Dendritic cell treated with granulocyte-macrophage colony-stimulating factor and Interleukin-4, amounts not matched to agents 40 ng/mL and 50 ng/mL, for 4 days (primary cell): ENCODE measurements at regions of chr9 and their contacts with region 1.

Region 1: DNA sequence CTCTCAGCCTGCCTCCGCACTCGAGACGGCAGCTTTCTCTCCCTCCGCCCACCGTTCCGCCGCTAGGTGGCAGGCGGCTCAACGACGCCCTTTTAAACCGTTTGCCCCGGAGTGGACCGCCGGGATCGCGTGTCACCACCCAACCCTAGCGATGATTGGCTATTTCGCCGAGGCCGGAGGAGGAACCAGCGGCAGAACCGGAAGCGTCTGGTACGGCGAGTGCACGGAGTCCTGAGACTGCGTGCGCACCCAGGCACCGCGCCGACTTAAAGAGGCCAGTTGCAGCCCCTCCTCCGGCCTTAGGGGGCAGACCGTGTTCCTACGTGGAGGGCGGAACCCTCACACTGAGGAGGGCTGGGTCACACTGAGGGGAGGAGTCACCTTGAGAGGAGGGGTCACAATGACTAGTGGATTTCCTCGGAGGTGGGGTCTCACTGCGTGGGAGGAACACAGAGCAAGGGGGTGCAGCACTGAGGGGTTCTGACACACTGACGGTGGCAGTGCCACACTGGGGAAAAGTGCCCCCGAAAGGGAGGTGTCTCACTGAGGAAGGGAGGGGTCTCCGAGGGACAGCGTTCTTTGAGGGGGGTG is 980 bp upstream of the TESK1 start:
- H3K4me3 Mint-ChIP-seq: peak overlapping the region; percentile 96
- H3K27ac Mint-ChIP-seq: peak overlapping the region; percentile 94
- H3K4me1 Mint-ChIP-seq: peaks cover 56% of the 10 kb centered on the region
- H3K27me3 Mint-ChIP-seq: no peaks in the 10 kb centered on the region

Region 2: GRCh38 chr9:34310205-34310604 is 1293.9 kb before region 1 on chr9:
- intact Hi-C with region 1: no loop called
- H3K4me3 Mint-ChIP-seq: no peak overlapping the region
- H3K27ac Mint-ChIP-seq: no peak overlapping the region
- H3K4me1 Mint-ChIP-seq: no peaks in the 10 kb centered on the region
- H3K27me3 Mint-ChIP-seq: no peaks in the 10 kb centered on the region

Region 3: GRCh38 chr9:35657546-35658136 is 53.6 kb after region 1 on chr9 and contains the start of gene RMRP:
- intact Hi-C with region 1: loop called (anchors 2 kb)
- H3K4me3 Mint-ChIP-seq: peak within 1 kb of the TSS; percentile 90
- H3K27ac Mint-ChIP-seq: peak within 1 kb of the TSS; percentile 95
- H3K4me1 Mint-ChIP-seq: peaks cover 65% of the 10 kb centered on the region
- H3K27me3 Mint-ChIP-seq: peaks cover 2% of the 10 kb centered on the region